GM12878 (cell line): ENCODE measurements at regions of chr17 and their contacts with region 1.

Region 1: DNA sequence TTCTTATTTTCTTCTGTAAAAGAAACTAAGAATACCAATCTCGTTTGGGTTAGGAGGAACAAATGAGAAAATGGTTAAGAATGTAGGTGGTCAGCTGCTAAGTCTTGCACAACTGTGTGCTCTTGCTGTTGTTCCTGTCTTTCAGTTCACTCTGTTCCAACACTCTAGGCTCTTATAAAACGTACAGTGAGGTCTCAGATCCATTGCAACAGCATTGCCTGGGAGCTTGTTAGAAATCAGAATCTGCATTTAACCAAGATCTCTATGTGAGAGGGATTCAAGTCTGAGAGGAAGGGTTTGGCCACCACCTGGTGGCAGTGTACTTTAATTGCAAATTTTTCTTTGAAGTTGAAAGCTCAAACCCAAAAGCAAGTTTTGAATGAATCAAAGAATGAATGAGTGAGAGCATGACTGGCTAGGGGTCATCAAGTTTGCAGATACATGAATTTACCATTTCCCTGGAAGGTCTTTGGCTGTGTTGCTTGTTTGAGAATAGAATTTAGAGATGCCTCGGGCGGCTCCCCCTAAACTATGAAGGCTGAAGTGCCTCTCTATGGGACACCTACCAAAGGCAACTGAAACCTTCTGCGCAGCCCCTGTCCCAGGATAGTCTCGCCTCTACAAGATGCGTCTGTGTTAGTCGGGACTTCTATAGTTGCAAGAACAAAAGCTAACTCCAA is 2.5 kb downstream of the ALOX15B start:
- DNase-seq: no peak
- ATAC-seq: peak; percentile 80
- H3K4me3 ChIP-seq: no peak overlapping the region
- H3K27ac ChIP-seq: no peak overlapping the region
- H3K4me1 ChIP-seq: no peaks in the 10 kb centered on the region
- H3K27me3 ChIP-seq: peaks cover 0 to 3% of the 10 kb centered on the region in 2 experiments; a peak in 2 of 4 replicates
- CTCF ChIP-seq: peak; percentile 54 to 79 (median 67); a peak in 5 of 6 replicates
- EP300 ChIP-seq: no peak
- POLR2A ChIP-seq: no peak
- RAD21 ChIP-seq: peak; percentile 78

Region 2: GRCh38 chr17:7194056-7194455 is 847.3 kb before region 1 on chr17:
- CTCF ChIA-PET with region 1: no interaction called
- POLR2A ChIA-PET with region 1: no interaction called
- RAD21 ChIA-PET with region 1: no interaction called
- SMC1A ChIA-PET with region 1: no interaction called
- in situ Hi-C with region 1: no loop called
- intact Hi-C with region 1: no loop called
- DNase-seq: no peak
- ATAC-seq: no peak
- H3K4me3 ChIP-seq: no peak overlapping the region
- H3K27ac ChIP-seq: no peak overlapping the region
- H3K4me1 ChIP-seq: no peaks in the 10 kb centered on the region
- H3K27me3 ChIP-seq: no peaks in the 10 kb centered on the region
- CTCF ChIP-seq: no peak
- EP300 ChIP-seq: no peak
- POLR2A ChIP-seq: no peak
- RAD21 ChIP-seq: no peak

Region 3: GRCh38 chr17:7740481-7741001 is 300.8 kb before region 1 on chr17:
- CTCF ChIA-PET with region 1: interaction called, 20 read pairs
- POLR2A ChIA-PET with region 1: no interaction called
- RAD21 ChIA-PET with region 1: interaction called, 6 read pairs
- SMC1A ChIA-PET with region 1: interaction called, 15 read pairs
- in situ Hi-C with region 1: no loop called
- intact Hi-C with region 1: loop called (anchors 5 kb)
- DNase-seq: no peak
- ATAC-seq: no peak
- H3K4me3 ChIP-seq: no peak overlapping the region
- H3K27ac ChIP-seq: no peak overlapping the region
- H3K4me1 ChIP-seq: no peaks in the 10 kb centered on the region
- H3K27me3 ChIP-seq: no peaks in the 10 kb centered on the region; a peak in 2 of 4 replicates
- CTCF ChIP-seq: no peak
- EP300 ChIP-seq: no peak
- POLR2A ChIP-seq: no peak
- RAD21 ChIP-seq: no peak

Region 4: DNA sequence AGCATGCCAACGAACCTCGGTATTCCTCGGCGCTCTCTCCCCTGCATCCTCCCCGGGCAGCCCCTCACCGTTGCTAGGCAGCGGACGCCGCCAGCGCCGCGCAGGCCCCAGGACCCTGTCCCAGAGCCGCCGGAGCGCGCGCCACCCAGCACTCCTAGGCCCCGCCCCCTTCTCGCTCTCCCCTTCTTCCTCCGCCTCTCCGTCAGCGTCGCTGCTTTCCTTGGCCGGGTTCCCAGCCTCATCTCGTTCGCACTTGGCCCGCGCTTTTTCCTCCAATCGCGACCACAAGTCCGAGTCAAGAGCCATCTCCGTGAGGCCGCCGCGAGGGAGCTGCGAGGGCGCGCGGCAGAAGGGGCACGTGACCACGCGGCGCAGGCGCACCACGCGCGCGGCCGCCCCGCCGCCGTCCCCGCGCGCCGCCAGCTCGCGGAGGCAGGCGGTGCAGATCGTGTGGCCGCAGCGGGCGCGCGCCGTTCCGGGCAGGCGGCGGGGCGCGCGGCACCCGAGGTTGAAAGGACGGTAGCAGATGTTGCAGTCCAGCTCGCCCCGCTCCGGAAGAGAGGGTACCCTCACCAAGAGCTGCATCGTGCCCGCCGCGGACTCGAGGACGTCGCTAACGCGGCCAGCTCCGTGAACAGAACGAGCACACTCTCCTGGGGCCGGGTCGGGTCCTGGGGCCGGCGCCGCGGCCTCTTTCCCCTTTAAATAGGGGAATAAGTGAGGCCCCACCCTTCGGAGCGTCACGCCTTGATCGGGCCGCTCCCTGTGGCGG is 125.6 kb before region 1 on chr17 and contains the start of gene RNF227:
- CTCF ChIA-PET with region 1: interaction called, 13 read pairs
- POLR2A ChIA-PET with region 1: interaction called, 3 read pairs
- RAD21 ChIA-PET with region 1: interaction called, 7 read pairs
- SMC1A ChIA-PET with region 1: interaction called, 3 read pairs
- in situ Hi-C with region 1: loop called (anchors 5 kb)
- intact Hi-C with region 1: loop called (anchors 2 kb)
- DNase-seq: peak; percentile 57
- ATAC-seq: peak; percentile 87
- H3K4me3 ChIP-seq: peak within 1 kb of the TSS; percentile 76
- H3K27ac ChIP-seq: peak within 1 kb of the TSS; percentile 34
- H3K4me1 ChIP-seq: peaks cover 10% of the 10 kb centered on the region
- H3K27me3 ChIP-seq: no peaks in the 10 kb centered on the region
- CTCF ChIP-seq: 0 out of 6 replicates have a peak, but pooled peaks of 1 of the 3 experiments have one; percentile 6
- EP300 ChIP-seq: no peak
- POLR2A ChIP-seq: peak; percentile 71
- RAD21 ChIP-seq: no peak
- polyA plus RNA-seq, gene RNF227: 0.49 to 0.87 TPM

Region 5: GRCh38 chr17:7997186-7997585 is 44.2 kb before region 1 on chr17:
- CTCF ChIA-PET with region 1: interaction called, 11 read pairs
- POLR2A ChIA-PET with region 1: no interaction called
- RAD21 ChIA-PET with region 1: interaction called, 4 read pairs
- SMC1A ChIA-PET with region 1: interaction called, 12 read pairs
- in situ Hi-C with region 1: no loop called
- intact Hi-C with region 1: no loop called
- DNase-seq: no peak
- ATAC-seq: peak; percentile 73
- H3K4me3 ChIP-seq: no peak overlapping the region
- H3K27ac ChIP-seq: no peak overlapping the region
- H3K4me1 ChIP-seq: peaks cover 9% of the 10 kb centered on the region
- H3K27me3 ChIP-seq: peaks cover under 1 to 2% of the 10 kb centered on the region in 2 experiments; a peak in 3 of 4 replicates
- CTCF ChIP-seq: peak in 2 of 3 experiments; percentile 21 to 41; a peak in 3 of 6 replicates
- EP300 ChIP-seq: no peak
- POLR2A ChIP-seq: no peak
- RAD21 ChIP-seq: no peak

Region 6: GRCh38 chr17:8016632-8017478 is 24.5 kb before region 1 on chr17:
- CTCF ChIA-PET with region 1: interaction called, 77 read pairs
- POLR2A ChIA-PET with region 1: interaction called, 3 read pairs
- RAD21 ChIA-PET with region 1: interaction called, 15 read pairs
- SMC1A ChIA-PET with region 1: interaction called, 32 read pairs
- in situ Hi-C with region 1: no loop called
- intact Hi-C with region 1: no loop called
- DNase-seq: no peak
- ATAC-seq: peak; percentile 87
- H3K4me3 ChIP-seq: no peak overlapping the region
- H3K27ac ChIP-seq: no peak overlapping the region
- H3K4me1 ChIP-seq: no peaks in the 10 kb centered on the region
- H3K27me3 ChIP-seq: peaks cover 0 to 3% of the 10 kb centered on the region in 2 experiments; a peak in 3 of 4 replicates
- CTCF ChIP-seq: peak; percentile 51 to 77 (median 63)
- EP300 ChIP-seq: no peak
- POLR2A ChIP-seq: no peak
- RAD21 ChIP-seq: peak; percentile 46

Region 7: GRCh38 chr17:8029135-8029534 is 12.3 kb before region 1 on chr17:
- CTCF ChIA-PET with region 1: interaction called, 11 read pairs
- POLR2A ChIA-PET with region 1: no interaction called
- RAD21 ChIA-PET with region 1: interaction called, 3 read pairs
- SMC1A ChIA-PET with region 1: interaction called, 4 read pairs
- in situ Hi-C with region 1: no loop called
- intact Hi-C with region 1: no loop called
- DNase-seq: no peak
- ATAC-seq: no peak
- H3K4me3 ChIP-seq: no peak overlapping the region
- H3K27ac ChIP-seq: no peak overlapping the region
- H3K4me1 ChIP-seq: no peaks in the 10 kb centered on the region
- H3K27me3 ChIP-seq: peaks cover 0 to 5% of the 10 kb centered on the region in 2 experiments; a peak in 2 of 4 replicates
- CTCF ChIP-seq: no peak
- EP300 ChIP-seq: no peak
- POLR2A ChIP-seq: no peak
- RAD21 ChIP-seq: no peak

Region 8: DNA sequence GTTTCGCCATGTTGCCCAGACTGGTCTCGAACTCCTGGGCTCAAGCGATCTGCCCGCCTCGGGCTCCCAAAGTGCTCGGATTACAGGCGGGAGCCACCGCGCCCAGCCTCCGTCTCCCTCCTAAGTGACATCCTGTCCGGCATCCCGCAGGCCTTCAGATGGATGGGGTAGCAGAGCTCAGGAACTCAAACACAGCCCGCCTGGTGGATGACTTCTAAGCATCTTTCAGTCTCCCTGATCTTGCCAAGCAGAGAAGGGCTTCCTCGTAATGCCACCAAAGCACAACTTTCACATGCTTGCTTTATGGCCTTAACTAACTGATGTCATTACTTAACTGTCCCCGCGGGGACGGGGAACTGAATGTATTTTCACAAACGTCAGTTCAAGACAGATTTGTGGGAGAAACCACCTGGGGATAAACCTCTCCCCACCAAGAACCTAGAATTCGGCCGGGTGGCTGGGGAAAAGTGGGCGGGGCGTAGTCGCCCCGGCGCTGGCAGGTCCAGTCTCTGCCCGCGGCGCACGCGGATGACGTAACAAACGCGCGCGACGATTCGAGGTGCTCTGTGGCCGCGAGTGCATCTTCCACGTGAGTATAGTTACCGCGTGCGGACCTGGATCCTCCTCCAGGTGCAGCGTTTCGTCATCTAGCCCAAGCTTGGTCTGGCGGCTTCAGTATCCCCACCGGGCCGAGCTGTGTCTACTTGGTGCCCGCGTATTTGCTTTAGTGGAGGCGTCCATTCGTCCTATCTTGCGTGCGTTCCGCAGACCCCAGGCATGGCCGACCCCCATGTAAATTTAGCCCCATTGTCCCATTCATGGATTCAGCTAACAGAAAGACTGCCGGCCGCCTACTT is 207.6 kb after region 1 on chr17 and contains the start of gene PFAS:
- CTCF ChIA-PET with region 1: no interaction called
- POLR2A ChIA-PET with region 1: no interaction called
- RAD21 ChIA-PET with region 1: no interaction called
- SMC1A ChIA-PET with region 1: no interaction called
- in situ Hi-C with region 1: no loop called
- intact Hi-C with region 1: no loop called
- DNase-seq: peak; percentile 79
- ATAC-seq: peak; percentile 64
- H3K4me3 ChIP-seq: peak within 1 kb of the TSS; percentile 100
- H3K27ac ChIP-seq: peak within 1 kb of the TSS; percentile 100
- H3K4me1 ChIP-seq: peaks cover 10% of the 10 kb centered on the region
- H3K27me3 ChIP-seq: no peaks in the 10 kb centered on the region
- CTCF ChIP-seq: no peak
- EP300 ChIP-seq: peak; percentile 30 to 57; a peak in 2 of 4 replicates
- POLR2A ChIP-seq: peak; percentile 92
- RAD21 ChIP-seq: no peak
- polyA plus RNA-seq, gene PFAS: 13.9 to 16.1 TPM